ENCODE measurements at regions of chr13 and their contacts with region 1.

Region 1: GRCh38 chr13:21297914-21298831 is 121.7 kb downstream of the MRPL57 start:
- DNase-seq: peak; percentile 85
- H3K4me3 Mint-ChIP-seq: peak overlapping the region; percentile 96
- H3K27ac Mint-ChIP-seq: peak overlapping the region; percentile 70
- H3K4me1 Mint-ChIP-seq: peaks cover 36% of the 10 kb centered on the region
- H3K27me3 Mint-ChIP-seq: no peaks in the 10 kb centered on the region

Region 2: GRCh38 chr13:19959831-19960652 is 1338.1 kb before region 1 on chr13:
- intact Hi-C with region 1: loop called (anchors 10 kb)
- DNase-seq: peak; percentile 80
- H3K4me3 Mint-ChIP-seq: peak overlapping the region; percentile 95
- H3K27ac Mint-ChIP-seq: peak overlapping the region; percentile 93
- H3K4me1 Mint-ChIP-seq: peaks cover 25% of the 10 kb centered on the region
- H3K27me3 Mint-ChIP-seq: peaks cover 8% of the 10 kb centered on the region

Region 3: DNA sequence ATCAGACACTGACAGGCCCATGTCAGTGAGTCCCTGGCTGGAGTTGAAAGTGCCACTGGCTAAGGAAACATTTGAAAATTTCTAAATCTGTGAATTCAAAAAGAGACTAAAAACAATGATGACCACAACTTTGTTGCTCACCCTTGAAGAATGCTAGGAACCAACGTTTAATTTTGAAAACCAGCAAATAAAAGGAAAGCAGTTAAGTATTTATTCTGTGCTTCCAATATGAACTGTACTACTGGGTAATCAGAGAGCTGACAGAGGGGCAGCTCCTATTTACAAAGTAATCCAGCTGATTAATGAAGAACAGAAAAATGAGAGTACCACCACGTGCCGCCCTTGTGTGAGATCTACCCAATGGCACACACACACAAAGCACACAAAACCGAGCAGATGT is 192.1 kb before region 1 on chr13:
- intact Hi-C with region 1: loop called (anchors 1 kb)
- DNase-seq: no peak
- H3K4me3 Mint-ChIP-seq: no peak overlapping the region
- H3K27ac Mint-ChIP-seq: no peak overlapping the region
- H3K4me1 Mint-ChIP-seq: no peaks in the 10 kb centered on the region
- H3K27me3 Mint-ChIP-seq: peaks cover 3% of the 10 kb centered on the region

Region 4: GRCh38 chr13:21256351-21256761 is 41.8 kb before region 1 on chr13:
- intact Hi-C with region 1: no loop called
- DNase-seq: no peak
- H3K4me3 Mint-ChIP-seq: no peak overlapping the region
- H3K27ac Mint-ChIP-seq: peak overlapping the region; percentile 46
- H3K4me1 Mint-ChIP-seq: peaks cover 9% of the 10 kb centered on the region
- H3K27me3 Mint-ChIP-seq: peaks cover 5% of the 10 kb centered on the region

Region 5: DNA sequence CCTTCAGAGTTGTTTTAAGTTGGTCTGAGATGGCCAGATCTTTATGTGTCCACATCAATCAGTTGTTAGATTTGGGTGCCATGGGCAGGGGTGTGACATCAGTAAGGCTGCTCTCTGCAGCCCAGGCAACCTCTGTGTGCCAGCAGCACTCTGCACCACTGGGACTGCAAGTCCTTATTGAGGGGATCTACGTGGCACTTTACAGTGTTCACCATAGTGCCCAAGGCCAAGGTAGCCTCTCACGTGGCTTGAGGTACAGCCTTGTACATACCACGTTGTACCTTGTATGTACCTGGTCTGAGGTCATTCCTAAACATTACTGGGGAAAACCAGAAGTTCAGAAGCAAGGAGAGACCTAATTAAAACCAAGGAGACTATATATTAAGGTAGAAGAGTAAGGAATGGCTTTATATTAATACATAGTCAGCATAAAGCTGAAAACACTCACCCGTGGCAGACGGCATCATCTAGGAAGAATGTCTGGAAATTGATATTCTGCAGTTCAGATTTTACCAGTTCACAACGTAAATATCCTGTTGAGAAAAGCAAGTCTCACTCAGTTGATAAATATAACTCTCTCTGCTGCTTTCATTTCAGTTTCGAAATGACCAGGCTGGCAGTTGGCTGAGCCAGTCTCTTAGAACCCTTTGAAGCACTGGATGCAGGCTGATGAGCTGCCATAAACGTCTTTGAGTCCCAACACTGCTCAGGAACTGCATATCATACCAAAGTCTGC is 32.1 kb after region 1 on chr13:
- intact Hi-C with region 1: loop called (anchors 1 kb)
- DNase-seq: peak; percentile 16
- H3K4me3 Mint-ChIP-seq: peak overlapping the region; percentile 35
- H3K27ac Mint-ChIP-seq: peak overlapping the region; percentile 79
- H3K4me1 Mint-ChIP-seq: peaks cover 45% of the 10 kb centered on the region
- H3K27me3 Mint-ChIP-seq: no peaks in the 10 kb centered on the region

Region 6: GRCh38 chr13:21402586-21403228 is 104.5 kb after region 1 on chr13:
- intact Hi-C with region 1: loop called (anchors 5 kb)
- DNase-seq: no peak
- H3K4me3 Mint-ChIP-seq: no peak overlapping the region
- H3K27ac Mint-ChIP-seq: no peak overlapping the region
- H3K4me1 Mint-ChIP-seq: peaks cover 30% of the 10 kb centered on the region
- H3K27me3 Mint-ChIP-seq: no peaks in the 10 kb centered on the region

Region 7: GRCh38 chr13:21603531-21604448 is 305.6 kb after region 1 on chr13 and contains the start of gene MICU2:
- intact Hi-C with region 1: loop called (anchors 1 kb)
- DNase-seq: peak; percentile 94
- H3K4me3 Mint-ChIP-seq: peak within 1 kb of the TSS; percentile 85
- H3K27ac Mint-ChIP-seq: peak within 1 kb of the TSS; percentile 88
- H3K4me1 Mint-ChIP-seq: peaks cover 24% of the 10 kb centered on the region
- H3K27me3 Mint-ChIP-seq: peaks cover 24% of the 10 kb centered on the region
- total RNA-seq, gene MICU2: 32.5 and 33.8 TPM in 2 replicates